ENCODE measurements at regions of chr21 and their contacts with region 1.

Region 1: DNA sequence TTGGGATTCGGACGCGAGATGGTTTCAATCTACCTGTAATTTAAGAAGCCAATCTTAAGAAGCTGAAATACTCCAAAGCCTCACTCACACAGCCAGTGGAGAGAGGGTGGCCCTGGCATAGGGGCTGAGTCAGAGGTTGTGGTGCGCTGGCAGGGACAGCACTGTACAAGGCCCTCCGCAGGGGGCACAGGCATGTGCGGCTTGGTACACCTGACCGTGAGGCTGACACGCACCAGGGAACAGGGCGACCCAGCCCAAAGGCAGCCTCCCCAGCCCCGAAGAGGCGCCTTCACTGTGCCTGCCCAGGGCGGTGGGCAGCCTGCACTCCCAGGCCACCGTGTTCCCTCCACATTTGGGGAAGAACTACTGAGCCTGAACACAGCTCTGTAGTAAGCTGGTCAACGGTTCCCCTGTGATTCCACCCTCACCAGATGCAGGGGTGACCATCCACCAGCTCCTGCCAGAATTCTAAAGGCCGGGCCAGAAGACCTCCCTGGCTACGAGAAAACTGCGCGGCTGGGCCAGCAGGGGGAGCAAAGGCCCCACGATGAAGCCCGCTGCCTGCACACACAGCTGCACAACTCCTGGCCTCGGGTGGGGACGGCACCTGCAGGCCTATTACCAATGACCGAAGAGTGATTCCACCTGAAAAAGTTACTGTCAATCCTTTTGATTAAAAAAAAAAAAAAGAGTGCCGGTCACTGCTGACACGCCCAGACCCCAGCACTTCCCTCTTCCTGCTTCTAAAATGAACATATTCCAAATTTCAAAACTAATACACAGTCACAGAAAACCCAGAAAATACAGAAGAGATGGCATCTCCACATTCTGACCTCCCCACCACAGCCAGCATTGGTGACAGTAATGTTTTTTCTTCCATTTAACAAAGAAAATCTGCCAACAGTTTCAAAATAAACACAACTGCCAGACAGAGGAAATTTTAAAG is 49.6 kb upstream of the RIPK4 start:
- DNase-seq: peak; percentile 71
- H3K4me3 Mint-ChIP-seq: no peak overlapping the region
- H3K27ac Mint-ChIP-seq: no peak overlapping the region
- H3K4me1 Mint-ChIP-seq: peaks cover 3% of the 10 kb centered on the region
- H3K27me3 Mint-ChIP-seq: no peaks in the 10 kb centered on the region

Region 2: GRCh38 chr21:41361786-41362604 is 454.5 kb before region 1 on chr21 and contains the start of gene MX2:
- CTCF ChIA-PET with region 1: no interaction called
- DNase-seq: peak; percentile 90
- H3K4me3 Mint-ChIP-seq: peak within 1 kb of the TSS; percentile 75
- H3K27ac Mint-ChIP-seq: peak within 1 kb of the TSS; percentile 99
- H3K4me1 Mint-ChIP-seq: peaks cover 62% of the 10 kb centered on the region
- H3K27me3 Mint-ChIP-seq: peaks cover 10% of the 10 kb centered on the region

Region 3: DNA sequence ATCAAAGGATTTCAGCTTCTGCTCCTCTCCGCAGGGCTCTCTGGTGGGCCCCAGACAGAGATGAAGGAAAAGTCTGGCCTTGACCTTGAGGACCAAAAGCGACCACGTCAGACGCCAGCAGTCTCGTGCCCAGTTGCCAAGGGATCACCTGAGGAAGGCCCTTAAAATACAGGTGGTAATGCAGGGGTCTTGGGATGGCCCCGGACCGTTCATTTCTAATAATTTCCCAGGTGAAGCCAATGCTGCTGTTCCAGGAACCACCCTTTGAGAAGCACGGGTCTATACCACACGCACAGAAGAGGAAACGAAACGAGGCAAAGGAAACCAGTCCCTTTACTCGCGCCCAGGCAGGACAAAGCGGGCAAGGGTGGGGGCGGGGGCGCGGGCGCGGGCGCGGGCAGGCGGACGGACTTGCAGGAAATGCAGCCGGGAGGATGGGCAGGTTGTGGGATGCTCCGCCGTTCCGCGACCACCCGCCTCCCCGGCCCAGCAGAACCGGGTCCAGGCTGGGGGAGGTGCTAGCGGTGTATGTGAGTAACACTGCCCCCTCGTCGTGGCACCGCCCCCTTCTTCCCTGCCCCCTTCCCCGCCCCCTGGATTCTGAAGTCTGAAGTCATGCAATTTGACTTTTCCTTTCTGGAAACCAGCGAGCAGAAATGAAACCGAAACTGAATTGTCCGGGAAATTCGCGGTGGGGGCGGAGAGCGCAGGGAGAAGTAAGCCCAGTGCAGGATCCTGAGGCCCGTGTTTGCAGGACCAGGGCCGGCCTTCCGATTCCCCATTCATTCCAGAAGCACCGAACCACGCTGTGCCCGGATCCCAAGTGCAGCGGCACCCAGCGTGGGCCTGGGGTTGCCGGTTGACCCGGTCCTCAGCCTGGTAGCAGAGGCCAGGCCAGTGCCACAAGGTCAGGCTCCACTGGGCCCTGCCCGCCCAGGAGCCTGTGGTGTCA is 396.3 kb before region 1 on chr21:
- CTCF ChIA-PET with region 1: no interaction called
- DNase-seq: peak; percentile 72
- H3K4me3 Mint-ChIP-seq: peak overlapping the region; percentile 81
- H3K27ac Mint-ChIP-seq: peak overlapping the region; percentile 88
- H3K4me1 Mint-ChIP-seq: peaks cover 65% of the 10 kb centered on the region
- H3K27me3 Mint-ChIP-seq: peaks cover 7% of the 10 kb centered on the region

Region 4: DNA sequence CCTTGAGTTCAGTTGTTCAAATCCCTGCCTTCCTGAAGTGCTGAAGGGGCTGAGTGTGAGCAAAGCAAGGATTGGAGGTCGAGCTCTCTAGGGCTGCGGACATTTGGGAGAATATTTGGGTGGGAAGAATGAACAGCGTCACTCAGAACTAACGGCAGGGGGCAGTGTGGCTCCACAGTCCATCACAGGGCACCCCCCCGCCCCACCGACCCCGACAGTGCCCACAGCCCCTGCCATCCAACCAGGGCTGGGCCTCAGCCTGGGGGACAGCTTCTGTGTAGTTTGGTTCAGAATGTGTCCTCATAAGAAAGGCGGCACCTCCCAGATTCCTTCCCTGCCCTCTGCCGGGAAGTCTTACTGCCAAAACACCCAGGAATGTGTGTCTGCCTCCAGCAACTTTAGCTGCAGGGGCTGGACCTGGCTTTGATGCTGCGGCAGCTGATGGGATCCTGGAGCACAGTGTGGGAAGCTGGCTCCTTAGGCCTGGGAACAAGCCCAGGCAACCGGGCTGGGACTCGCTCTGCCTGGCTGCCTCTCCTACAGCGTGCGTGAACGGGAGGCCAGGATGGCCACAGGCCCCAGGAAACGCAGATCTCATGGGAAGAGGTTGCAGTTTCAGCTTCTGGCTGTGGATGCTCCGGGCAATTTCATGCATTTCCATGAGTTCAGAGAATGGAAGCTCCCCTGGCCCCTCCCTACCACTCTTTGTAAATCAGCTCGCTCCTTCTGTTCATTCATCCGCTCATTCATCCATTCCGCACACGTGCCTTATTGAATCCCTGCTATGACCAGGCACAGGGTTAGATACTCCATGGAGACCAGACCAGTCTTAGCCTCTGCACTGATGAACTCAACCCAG is 203.6 kb before region 1 on chr21:
- CTCF ChIA-PET with region 1: interaction called, 10 read pairs
- DNase-seq: peak; percentile 44
- H3K4me3 Mint-ChIP-seq: no peak overlapping the region
- H3K27ac Mint-ChIP-seq: no peak overlapping the region
- H3K4me1 Mint-ChIP-seq: no peaks in the 10 kb centered on the region
- H3K27me3 Mint-ChIP-seq: peaks cover 48% of the 10 kb centered on the region

Region 5: GRCh38 chr21:41916888-41917433 is 100.5 kb after region 1 on chr21:
- CTCF ChIA-PET with region 1: interaction called, 10 read pairs
- DNase-seq: no peak
- H3K4me3 Mint-ChIP-seq: no peak overlapping the region
- H3K27ac Mint-ChIP-seq: no peak overlapping the region
- H3K4me1 Mint-ChIP-seq: peaks cover 4% of the 10 kb centered on the region
- H3K27me3 Mint-ChIP-seq: no peaks in the 10 kb centered on the region

Region 6: GRCh38 chr21:42107881-42108553 is 291.5 kb after region 1 on chr21:
- CTCF ChIA-PET with region 1: interaction called, 30 read pairs
- DNase-seq: peak; percentile 78
- H3K4me3 Mint-ChIP-seq: peak overlapping the region; percentile 33
- H3K27ac Mint-ChIP-seq: peak overlapping the region; percentile 80
- H3K4me1 Mint-ChIP-seq: peaks cover 14% of the 10 kb centered on the region
- H3K27me3 Mint-ChIP-seq: peaks cover 38% of the 10 kb centered on the region

Region 7: DNA sequence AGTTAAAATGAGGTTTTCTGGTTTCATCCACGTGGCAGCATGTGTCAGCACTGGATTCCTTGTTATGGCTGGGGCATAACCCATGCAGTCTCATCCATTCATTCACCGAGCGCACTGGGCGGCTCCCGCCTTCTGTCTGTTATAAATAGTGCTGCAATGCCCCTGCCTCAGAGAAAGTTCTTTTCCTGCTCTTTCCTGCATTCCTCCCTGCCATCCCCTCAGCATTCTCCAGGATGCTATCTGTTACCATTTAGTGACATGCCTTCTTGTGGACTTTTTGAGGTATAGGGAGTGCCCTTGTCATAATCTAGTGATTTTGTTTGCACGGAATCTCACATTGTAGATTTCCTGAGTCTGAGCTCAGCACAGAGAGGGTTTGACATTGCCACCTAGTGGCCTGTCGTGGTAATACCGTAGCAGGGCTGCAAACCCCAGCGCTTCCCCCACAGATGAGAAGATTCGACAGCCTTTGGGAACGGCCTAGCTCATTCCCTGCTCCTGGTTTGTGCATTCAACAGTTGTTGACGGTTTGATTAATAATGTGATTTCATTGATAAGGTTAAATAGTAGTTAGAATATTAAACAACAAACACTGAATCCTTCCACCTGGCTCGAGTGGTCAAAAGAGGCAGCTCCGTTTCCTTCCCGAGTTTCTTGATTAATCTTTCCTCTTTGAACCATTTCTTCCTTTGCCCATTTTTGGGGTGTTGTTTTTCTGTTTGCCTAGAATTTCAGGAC is 300.9 kb after region 1 on chr21:
- CTCF ChIA-PET with region 1: interaction called, 48 read pairs
- DNase-seq: peak; percentile 84
- H3K4me3 Mint-ChIP-seq: no peak overlapping the region
- H3K27ac Mint-ChIP-seq: no peak overlapping the region
- H3K4me1 Mint-ChIP-seq: peaks cover 37% of the 10 kb centered on the region
- H3K27me3 Mint-ChIP-seq: peaks cover 89% of the 10 kb centered on the region